Activated naive CD4-positive, alpha-beta T cell treated with anti-CD3 and anti-CD28 coated beads, Interleukin-2, amount 10 ng/mL, durations not matched to agents 7 days and 5 days (primary cell): ENCODE measurements at regions of chr22 and their contacts with region 1.

Region 1: DNA sequence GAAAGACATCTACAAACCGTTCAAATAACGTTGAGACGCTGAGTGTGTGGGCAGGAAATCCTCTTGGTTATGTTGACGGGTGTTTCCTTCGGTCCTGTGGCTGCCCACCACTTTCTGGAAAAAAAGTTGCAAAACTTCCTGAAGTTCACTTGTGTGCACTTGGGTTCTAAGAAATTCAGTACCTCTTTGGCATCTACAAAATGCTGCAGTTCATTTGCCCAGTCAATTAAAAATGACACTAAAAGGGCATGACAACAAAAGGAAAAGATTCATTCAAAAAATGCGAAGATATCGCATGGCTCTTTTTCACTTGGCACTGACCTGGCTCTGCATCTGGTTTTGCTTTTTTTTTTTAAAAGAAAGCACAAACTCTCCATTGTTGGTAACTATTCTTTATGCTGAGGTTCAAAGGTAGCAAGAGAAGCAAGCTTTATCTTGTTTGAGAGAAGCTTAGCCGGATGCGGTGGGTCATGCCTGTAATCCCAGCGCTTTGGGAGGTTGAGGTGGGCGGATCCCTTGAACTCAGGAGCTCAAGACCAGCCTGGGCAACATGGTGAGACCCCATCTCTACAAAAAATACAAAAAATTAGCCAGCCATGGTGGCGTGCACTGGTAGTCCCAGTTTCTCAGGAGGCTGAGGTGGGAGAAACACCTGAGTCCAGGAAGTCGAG is 10.6 kb upstream of the XBP1 start:
- DNase-seq: peak; percentile 70
- H3K4me3 Mint-ChIP-seq: peak overlapping the region; percentile 75
- H3K27ac Mint-ChIP-seq: peak overlapping the region; percentile 99
- H3K4me1 Mint-ChIP-seq: peaks cover 88% of the 10 kb centered on the region
- H3K27me3 Mint-ChIP-seq: no peaks in the 10 kb centered on the region

Region 2: DNA sequence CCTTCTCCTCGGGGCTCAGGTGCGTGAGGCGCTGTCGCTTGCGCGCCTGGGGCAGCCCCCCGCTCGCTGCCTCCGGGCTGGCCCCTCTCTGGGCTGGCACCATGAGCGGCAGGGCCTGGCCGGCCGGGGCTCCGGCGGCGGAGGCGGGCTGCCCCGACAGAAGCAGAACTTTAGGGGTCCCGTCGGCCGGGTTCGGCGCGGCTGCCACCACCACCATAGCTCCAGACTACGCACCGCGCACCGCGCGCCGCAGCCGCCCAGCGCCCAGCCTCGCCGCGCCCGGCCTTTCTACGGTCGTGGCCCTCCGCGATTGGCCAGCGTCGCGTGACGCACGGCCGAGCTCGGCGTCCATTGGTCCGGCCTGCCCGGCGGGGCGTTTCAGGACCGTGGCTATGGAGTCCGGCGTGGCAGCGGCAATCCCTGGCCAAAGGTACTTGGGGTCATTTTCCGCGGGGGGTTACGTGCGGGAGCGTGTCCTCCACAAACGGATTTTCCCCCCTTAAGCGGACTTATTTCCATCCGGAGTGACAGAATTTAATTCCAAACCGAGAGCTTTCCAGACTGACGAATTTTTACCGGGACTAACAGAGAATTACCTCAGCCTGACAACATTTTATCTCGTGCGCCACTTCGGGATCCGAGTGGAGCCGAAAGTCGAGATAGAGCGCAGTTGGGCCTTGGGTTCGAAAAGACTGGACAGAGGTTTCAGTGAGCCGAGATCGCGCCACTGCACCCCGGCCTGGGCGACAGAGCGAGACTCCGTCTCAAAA is 10.5 kb before region 1 on chr22 and contains the start of gene XBP1:
- CTCF ChIA-PET with region 1: interaction called, 10 read pairs
- DNase-seq: peak; percentile 92
- H3K4me3 Mint-ChIP-seq: peak within 1 kb of the TSS; percentile 84
- H3K27ac Mint-ChIP-seq: peak within 1 kb of the TSS; percentile 91
- H3K4me1 Mint-ChIP-seq: peaks cover 49% of the 10 kb centered on the region
- H3K27me3 Mint-ChIP-seq: peaks cover 3% of the 10 kb centered on the region

Region 3: DNA sequence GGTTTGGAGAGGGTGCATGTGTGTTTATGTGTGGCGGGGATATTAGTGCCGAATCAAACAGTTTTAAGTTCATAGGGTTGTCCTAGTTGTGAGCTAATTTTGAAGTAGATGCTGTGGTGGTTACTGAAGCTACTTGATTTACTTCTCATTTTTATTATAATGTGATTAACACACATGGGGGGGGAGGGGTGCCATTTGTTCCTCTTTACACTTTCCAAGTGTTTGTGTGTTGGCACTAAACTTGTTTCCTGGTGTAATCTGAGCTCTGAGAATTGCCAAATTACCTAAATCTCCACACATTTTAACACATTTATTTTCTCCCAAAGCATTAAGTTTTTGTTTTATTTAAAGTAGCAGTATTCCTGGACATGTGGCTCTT is 132.5 kb after region 1 on chr22:
- CTCF ChIA-PET with region 1: no interaction called
- DNase-seq: no peak
- H3K4me3 Mint-ChIP-seq: no peak overlapping the region
- H3K27ac Mint-ChIP-seq: no peak overlapping the region
- H3K4me1 Mint-ChIP-seq: no peaks in the 10 kb centered on the region
- H3K27me3 Mint-ChIP-seq: peaks cover 86% of the 10 kb centered on the region